ENCODE measurements at regions of chr6 and their contacts with region 1.

Region 1: DNA sequence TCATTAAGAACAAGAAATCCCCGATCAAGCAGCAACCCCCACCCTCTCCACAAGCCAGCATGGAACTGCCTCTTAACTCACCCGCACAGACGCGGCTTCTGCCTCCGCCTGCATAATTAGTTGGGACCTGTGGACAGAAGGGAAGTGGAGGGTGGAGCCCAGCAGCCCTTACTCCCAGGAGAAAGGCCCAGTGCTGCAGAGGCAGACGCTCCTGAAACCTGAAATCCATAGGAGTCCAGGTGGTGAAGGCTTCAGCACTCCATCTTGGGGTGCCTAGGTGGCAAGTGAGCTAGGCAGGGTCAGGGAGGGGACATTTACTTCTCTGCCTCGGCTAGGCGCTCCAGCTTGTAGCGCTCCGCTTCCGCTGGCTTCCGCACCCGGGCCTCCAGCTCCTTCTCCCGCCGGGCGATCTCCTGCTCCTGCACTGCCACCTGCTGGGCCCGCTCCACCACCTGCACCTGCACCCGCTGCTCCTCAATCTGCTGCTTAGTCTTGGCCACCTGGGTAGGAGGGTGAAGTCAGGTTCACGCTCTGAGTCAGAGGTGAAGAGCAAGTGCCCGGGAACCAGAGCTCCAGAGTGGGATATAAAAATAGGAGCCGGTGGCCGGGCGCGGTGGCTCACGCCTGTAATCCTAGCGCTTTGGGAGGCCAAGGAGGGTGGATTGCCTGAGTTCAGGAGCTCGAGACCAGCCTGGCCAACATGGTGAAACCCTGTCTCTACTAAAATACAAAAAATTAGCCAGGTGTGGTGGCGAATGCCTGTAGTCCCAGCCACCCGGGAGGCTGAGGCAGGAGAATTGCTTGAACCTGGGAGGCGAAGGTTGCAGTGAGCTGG is 10.7 kb downstream of the TUBB start:
- DNase-seq: peak; percentile 92
- ATAC-seq: peak; percentile 95
- H3K4me3 Mint-ChIP-seq: peak overlapping the region; percentile 44
- H3K27ac Mint-ChIP-seq: peak overlapping the region; percentile 70
- H3K4me1 Mint-ChIP-seq: peaks cover 61% of the 10 kb centered on the region
- H3K27me3 Mint-ChIP-seq: no peaks in the 10 kb centered on the region

Region 2: GRCh38 chr6:30678964-30679726 is 51.7 kb before region 1 on chr6:
- CTCF ChIA-PET with region 1: interaction called, 686 read pairs
- POLR2A ChIA-PET with region 1: interaction called, 343 read pairs
- DNase-seq: peak; percentile 94
- ATAC-seq: peak; percentile 54
- H3K4me3 Mint-ChIP-seq: peak overlapping the region; percentile 93
- H3K27ac Mint-ChIP-seq: peak overlapping the region; percentile 98
- H3K4me1 Mint-ChIP-seq: peaks cover 30% of the 10 kb centered on the region
- H3K27me3 Mint-ChIP-seq: no peaks in the 10 kb centered on the region

Region 3: GRCh38 chr6:30717042-30717844 is 13.6 kb before region 1 on chr6 and contains the start of gene MDC1:
- CTCF ChIA-PET with region 1: interaction called, 55 read pairs
- POLR2A ChIA-PET with region 1: interaction called, 9 read pairs
- DNase-seq: peak; percentile 100
- ATAC-seq: peak; percentile 81
- H3K4me3 Mint-ChIP-seq: peak within 1 kb of the TSS; percentile 98
- H3K27ac Mint-ChIP-seq: peak within 1 kb of the TSS; percentile 100
- H3K4me1 Mint-ChIP-seq: peaks cover 64% of the 10 kb centered on the region
- H3K27me3 Mint-ChIP-seq: no peaks in the 10 kb centered on the region
- total RNA-seq, gene MDC1: 48.5 to 52.4 TPM

Region 4: DNA sequence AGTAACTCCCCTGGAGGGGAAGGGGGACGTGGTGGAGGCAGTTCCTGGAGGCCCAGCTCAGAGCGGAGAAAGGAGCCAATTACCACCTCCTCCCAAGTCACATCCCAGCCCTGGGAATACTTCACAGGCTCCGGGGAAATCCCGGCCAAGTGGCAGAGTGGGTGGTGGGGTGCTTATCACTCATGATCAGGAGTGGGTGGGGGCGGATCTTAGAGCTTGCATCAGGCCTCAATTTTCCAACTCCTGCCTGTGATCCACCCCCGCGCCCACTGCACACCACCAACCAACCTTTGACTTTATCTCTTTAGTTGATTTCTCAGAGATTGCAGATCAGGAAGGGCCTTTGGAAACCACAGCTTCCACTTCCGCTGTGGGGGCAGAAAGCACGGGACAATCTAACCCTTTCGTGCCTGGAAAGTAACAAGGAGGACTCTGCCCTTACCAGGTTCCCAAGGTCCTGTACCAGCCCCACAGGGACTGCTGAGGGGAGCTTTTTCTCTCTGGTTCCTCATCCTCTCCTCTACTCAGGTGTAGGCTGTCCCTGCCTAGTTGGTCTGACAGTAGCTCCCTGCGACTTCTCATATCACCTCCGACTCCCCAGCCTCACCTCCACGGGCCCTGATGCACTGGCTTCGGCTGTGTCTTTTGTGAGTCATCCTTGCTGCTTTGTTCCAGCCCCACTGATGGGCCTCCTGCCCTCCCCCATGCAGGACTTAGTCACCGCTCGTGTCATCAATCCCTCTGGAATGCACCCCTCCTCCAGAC is 38.5 kb after region 1 on chr6:
- CTCF ChIA-PET with region 1: interaction called, 10 read pairs
- POLR2A ChIA-PET with region 1: interaction called, 4 read pairs
- DNase-seq: peak; percentile 86
- ATAC-seq: peak; percentile 84
- H3K4me3 Mint-ChIP-seq: peak overlapping the region; percentile 56
- H3K27ac Mint-ChIP-seq: peak overlapping the region; percentile 88
- H3K4me1 Mint-ChIP-seq: peaks cover 88% of the 10 kb centered on the region
- H3K27me3 Mint-ChIP-seq: no peaks in the 10 kb centered on the region

Region 5: DNA sequence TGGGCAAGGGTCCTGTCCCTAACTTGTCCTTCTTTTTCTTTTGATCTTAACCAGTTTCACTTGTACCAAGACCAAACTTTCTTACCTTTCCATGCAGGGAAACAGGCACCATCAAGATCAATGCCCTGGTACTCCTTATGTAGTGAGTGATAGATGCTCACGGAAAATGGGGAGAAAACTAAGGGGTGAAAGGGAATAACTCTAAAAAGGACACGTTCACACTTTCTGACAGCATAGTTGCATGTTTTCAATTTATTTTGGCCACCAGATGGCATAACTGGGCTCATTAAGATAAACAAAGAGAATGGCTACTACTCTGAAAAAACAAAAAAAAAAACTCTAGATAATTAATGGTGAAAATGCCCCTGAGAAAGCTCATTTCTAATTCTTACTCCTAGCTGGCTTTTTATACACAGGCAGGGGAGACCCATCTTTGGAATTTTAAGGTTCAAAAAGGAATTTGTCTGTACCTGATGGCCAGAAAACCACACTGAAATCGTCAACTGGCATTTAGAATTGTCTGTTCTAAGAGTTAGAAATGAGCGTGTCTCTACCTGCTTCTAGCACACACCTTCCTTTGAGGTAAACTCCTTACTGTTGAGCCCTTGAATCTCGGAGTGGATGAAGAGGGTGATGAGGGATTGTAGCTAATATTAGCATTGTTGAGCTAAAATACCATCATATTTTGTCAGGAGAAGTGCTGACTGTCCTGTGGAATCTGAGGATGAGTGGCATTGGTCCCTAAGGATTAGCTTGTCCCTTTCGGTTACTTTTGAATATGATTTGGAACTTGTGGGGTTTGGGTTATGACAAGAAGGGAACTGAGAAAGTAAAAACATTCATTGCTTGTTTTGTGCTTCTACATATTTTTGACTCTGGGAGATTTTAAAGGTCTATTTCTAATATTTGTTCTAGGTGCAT is 91.3 kb after region 1 on chr6:
- CTCF ChIA-PET with region 1: interaction called, 12 read pairs
- POLR2A ChIA-PET with region 1: no interaction called
- DNase-seq: no peak
- ATAC-seq: no peak
- H3K4me3 Mint-ChIP-seq: no peak overlapping the region
- H3K27ac Mint-ChIP-seq: peak overlapping the region; percentile 39
- H3K4me1 Mint-ChIP-seq: peaks cover 60% of the 10 kb centered on the region
- H3K27me3 Mint-ChIP-seq: no peaks in the 10 kb centered on the region

Measured in activated CD8-positive, alpha-beta T cell treated with anti-CD3 and anti-CD28 coated beads, Interleukin-2, amount 10 ng/mL, durations not matched to agents 7 days and 5 days (primary cell).